Sigmoid colon (tissue), 7 donors: ENCODE measurements at regions of chr19 and their contacts with region 1.

Region 1: GRCh38 chr19:57947208-57948134 is at the start of gene ZNF256:
- DNase-seq: peak; percentile 97
- H3K4me3 ChIP-seq: peak within 1 kb of the TSS; percentile 80 to 96 (median 92)
- H3K27ac ChIP-seq: peak within 1 kb of the TSS; percentile 83 to 88 (median 86)
- H3K4me1 ChIP-seq: peaks cover 0 to 16% (median 12%) of the 10 kb centered on the region in 4 donors
- H3K27me3 ChIP-seq: no peaks in the 10 kb centered on the region
- CTCF ChIP-seq: peak; percentile 51 to 67 (median 60)
- EP300 ChIP-seq: no peak
- POLR2A ChIP-seq: peak; percentile 19 to 27
- total RNA-seq, gene ZNF256: 2.8 to 4.8 (median 3.8) TPM

Region 2: DNA sequence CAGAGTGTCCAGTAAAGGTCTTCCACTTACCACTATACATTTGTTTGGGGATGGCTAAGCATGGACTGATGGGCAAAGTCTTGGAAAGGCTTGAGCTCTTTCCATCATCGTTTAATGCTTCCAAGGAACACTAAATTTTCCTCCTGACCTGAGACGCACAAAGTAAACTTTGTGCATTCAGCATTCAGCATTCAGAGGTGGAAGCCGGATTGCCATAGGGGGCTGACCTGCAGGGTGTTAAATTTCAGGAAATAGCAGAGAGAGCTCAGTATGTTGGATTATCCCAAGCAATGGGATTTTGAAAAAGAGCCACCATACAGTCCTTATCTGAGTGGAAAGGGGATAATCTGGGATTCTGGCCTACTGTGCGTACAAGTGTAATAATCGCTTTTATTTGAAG is 146.8 kb before region 1 on chr19:
- intact Hi-C with region 1: no loop called
- DNase-seq: no peak
- H3K4me3 ChIP-seq: no peak overlapping the region
- H3K27ac ChIP-seq: no peak overlapping the region
- H3K4me1 ChIP-seq: peaks cover 0 to 22% (median 15%) of the 10 kb centered on the region in 4 donors
- H3K27me3 ChIP-seq: no peaks in the 10 kb centered on the region
- CTCF ChIP-seq: no peak
- EP300 ChIP-seq: no peak
- POLR2A ChIP-seq: no peak

Region 3: DNA sequence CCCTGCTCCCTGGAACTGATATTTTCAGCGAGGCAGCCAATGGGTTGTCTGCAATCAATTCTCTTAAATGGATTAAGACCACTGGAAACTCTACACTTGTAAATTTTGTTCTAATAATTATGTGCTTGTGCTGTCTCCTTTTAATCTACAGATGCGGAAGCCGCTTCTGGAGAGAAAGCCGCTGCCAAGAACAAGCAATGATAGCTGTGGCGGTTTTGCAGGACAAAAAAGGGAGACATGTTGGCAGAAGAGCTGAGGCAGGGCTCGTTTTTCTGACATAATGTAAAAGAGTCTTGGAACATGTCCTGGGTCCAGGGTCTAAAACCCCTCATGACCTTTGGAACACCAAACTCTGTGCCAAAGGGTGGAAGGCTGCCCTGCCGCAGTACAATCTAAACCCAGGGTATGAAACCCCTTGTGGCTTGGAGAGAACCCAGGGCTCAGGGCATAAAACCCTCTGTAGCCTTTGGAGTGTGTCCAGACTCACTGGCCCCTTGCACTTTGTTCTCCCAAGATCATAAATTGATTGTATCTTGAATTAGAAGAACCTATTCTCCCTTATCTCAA is 43.8 kb before region 1 on chr19:
- intact Hi-C with region 1: no loop called
- DNase-seq: no peak
- H3K4me3 ChIP-seq: no peak overlapping the region
- H3K27ac ChIP-seq: no peak overlapping the region
- H3K4me1 ChIP-seq: no peaks in the 10 kb centered on the region
- H3K27me3 ChIP-seq: no peaks in the 10 kb centered on the region
- CTCF ChIP-seq: no peak
- EP300 ChIP-seq: no peak
- POLR2A ChIP-seq: no peak

Region 4: DNA sequence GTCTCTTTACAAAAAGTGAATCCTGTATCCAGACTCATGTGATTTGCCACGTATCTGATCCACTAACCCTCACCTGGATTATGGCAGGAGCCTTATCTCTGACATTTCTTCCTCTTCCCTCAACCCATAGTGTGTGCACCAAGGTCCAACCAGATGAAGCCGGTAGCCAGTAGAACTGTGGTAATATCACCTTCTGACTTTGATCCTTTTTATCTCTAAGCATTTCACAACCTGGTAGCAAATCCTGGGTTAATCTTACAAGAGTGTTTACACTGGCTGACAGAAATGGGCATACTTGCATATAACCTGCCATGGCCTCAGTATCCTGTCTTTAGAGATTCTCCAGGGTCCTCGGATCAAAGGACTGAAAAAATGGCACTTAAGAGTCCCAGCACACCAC is 32.9 kb before region 1 on chr19:
- intact Hi-C with region 1: loop called (anchors 2 kb)
- DNase-seq: no peak
- H3K4me3 ChIP-seq: no peak overlapping the region
- H3K27ac ChIP-seq: no peak overlapping the region
- H3K4me1 ChIP-seq: peaks cover 0 to 19% (median 11%) of the 10 kb centered on the region in 4 donors
- H3K27me3 ChIP-seq: no peaks in the 10 kb centered on the region
- CTCF ChIP-seq: no peak
- EP300 ChIP-seq: no peak
- POLR2A ChIP-seq: no peak